Calu3 (cell line): ENCODE measurements at regions of chr17 and their contacts with region 1.

Region 1: GRCh38 chr17:50547035-50547735 is at the start of gene SPATA20:
- DNase-seq: peak; percentile 97
- H3K4me3 Mint-ChIP-seq: peak within 1 kb of the TSS; percentile 60
- H3K27ac Mint-ChIP-seq: peak within 1 kb of the TSS; percentile 24
- H3K4me1 Mint-ChIP-seq: peaks cover 34% of the 10 kb centered on the region
- H3K27me3 Mint-ChIP-seq: no peaks in the 10 kb centered on the region
- CTCF ChIP-seq: peak; percentile 99
- total RNA-seq, gene SPATA20: 33.2 and 47.8 TPM in 2 replicates

Region 2: GRCh38 chr17:50507871-50508572 is 39.2 kb before region 1 on chr17 and contains the start of gene MYCBPAP:
- CTCF ChIA-PET with region 1: no interaction called
- intact Hi-C with region 1: no loop called
- DNase-seq: peak; percentile 88
- H3K4me3 Mint-ChIP-seq: peak within 1 kb of the TSS; percentile 76
- H3K27ac Mint-ChIP-seq: no peak within 1 kb of the TSS
- H3K4me1 Mint-ChIP-seq: peaks cover 28% of the 10 kb centered on the region
- H3K27me3 Mint-ChIP-seq: peaks cover 17% of the 10 kb centered on the region
- CTCF ChIP-seq: no peak
- total RNA-seq, gene MYCBPAP: 0.52 and 1.0 TPM in 2 replicates

Region 3: GRCh38 chr17:50626037-50626574 is 78.9 kb after region 1 on chr17:
- CTCF ChIA-PET with region 1: interaction called, 30 read pairs
- intact Hi-C with region 1: loop called (anchors 1 kb)
- DNase-seq: peak; percentile 89
- H3K4me3 Mint-ChIP-seq: no peak overlapping the region
- H3K27ac Mint-ChIP-seq: no peak overlapping the region
- H3K4me1 Mint-ChIP-seq: peaks cover 28% of the 10 kb centered on the region
- H3K27me3 Mint-ChIP-seq: peaks cover 14% of the 10 kb centered on the region
- CTCF ChIP-seq: peak; percentile 96

Region 4: GRCh38 chr17:50707289-50708049 is 160.3 kb after region 1 on chr17 and contains the start of gene ANKRD40:
- CTCF ChIA-PET with region 1: interaction called, 12 read pairs
- intact Hi-C with region 1: no loop called
- DNase-seq: peak; percentile 98
- H3K4me3 Mint-ChIP-seq: peak within 1 kb of the TSS; percentile 95
- H3K27ac Mint-ChIP-seq: peak within 1 kb of the TSS; percentile 89
- H3K4me1 Mint-ChIP-seq: peaks cover 24% of the 10 kb centered on the region
- H3K27me3 Mint-ChIP-seq: no peaks in the 10 kb centered on the region
- CTCF ChIP-seq: no peak
- total RNA-seq, gene ANKRD40: 67.2 and 68.5 TPM in 2 replicates

Region 5: DNA sequence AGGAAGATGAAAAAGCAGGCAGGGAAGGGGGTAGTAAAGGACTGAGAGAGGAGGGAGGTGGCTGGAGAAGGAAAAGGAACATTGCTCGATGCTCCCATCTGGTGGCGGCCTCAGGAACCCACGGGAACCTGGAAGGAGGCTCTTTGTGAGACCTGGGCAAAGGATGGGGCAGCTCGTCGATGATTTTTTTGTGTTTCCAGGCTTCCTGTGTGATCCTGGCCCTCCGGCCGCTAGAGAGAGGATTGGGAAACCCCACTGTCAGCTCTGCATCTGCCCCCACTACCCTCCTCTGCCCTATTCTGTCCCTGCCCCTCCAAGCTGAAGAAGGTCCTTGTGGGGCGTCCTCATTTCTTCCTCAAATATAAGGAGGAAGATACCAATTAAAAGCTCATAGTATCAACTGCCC is 294.8 kb after region 1 on chr17:
- CTCF ChIA-PET with region 1: interaction called, 3 read pairs
- intact Hi-C with region 1: loop called (anchors 2 kb)
- DNase-seq: peak; percentile 91
- H3K4me3 Mint-ChIP-seq: no peak overlapping the region
- H3K27ac Mint-ChIP-seq: no peak overlapping the region
- H3K4me1 Mint-ChIP-seq: peaks cover 8% of the 10 kb centered on the region
- H3K27me3 Mint-ChIP-seq: peaks cover 6% of the 10 kb centered on the region
- CTCF ChIP-seq: peak; percentile 83

Region 6: DNA sequence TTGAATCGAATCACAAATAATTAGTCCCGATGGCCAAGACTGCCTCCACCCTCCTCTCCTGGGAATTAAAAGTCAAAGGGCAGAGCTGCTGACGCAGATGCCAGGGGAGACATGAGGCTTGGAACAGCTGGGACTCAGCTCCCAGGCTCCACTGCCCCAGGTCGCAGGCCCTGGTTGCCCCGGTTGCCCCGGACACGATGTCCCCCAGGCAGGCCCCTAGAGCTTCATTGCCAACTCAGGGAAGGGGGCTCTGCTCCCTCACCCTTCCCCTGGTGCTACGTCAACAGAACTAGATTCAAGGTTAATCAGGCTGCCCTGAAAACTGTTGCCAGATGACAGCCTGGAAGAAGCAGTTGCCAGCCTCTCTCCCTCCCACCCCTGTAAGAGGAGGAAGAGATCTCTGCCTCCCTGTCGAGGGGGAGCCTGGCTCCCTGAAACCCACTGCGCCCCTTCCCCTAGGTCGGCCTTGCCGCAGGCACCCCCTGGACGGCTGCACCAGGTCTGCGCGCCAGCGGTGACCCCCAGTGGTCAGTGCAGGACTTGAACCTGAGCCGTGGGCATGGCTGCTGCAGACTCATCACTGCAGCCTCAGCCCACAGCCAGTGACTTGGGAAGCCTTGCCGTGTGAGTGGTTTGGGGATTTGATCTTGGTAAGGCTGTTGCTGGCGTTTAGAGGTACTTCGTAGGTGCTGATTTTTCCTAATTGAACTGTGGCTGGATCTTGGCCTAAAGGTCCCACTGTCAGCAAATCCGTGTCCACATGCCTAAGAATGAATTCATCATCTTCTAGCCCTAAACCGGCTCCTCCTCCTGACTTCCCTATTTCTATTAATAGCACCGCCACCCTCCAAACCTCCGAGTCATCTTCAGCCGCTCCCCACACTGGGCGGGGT is 403.1 kb after region 1 on chr17:
- CTCF ChIA-PET with region 1: no interaction called
- intact Hi-C with region 1: loop called (anchors 10 kb)
- DNase-seq: peak; percentile 89
- H3K4me3 Mint-ChIP-seq: peak overlapping the region; percentile 26
- H3K27ac Mint-ChIP-seq: peak overlapping the region; percentile 19
- H3K4me1 Mint-ChIP-seq: peaks cover 58% of the 10 kb centered on the region
- H3K27me3 Mint-ChIP-seq: no peaks in the 10 kb centered on the region
- CTCF ChIP-seq: peak; percentile 94